Body of pancreas (tissue), 4 donors: ENCODE measurements at regions of chr16 and their contacts with region 1.

Region 1: GRCh38 chr16:4693296-4693955 is at the start of gene NUDT16L1:
- DNase-seq: peak; percentile 96 to 97 (median 97)
- ATAC-seq: peak; percentile 93
- H3K4me3 ChIP-seq: peak within 1 kb of the TSS; percentile 84 to 93
- H3K27ac ChIP-seq: peak within 1 kb of the TSS; percentile 84 to 96 (median 89)
- H3K4me1 ChIP-seq: peaks cover 25% of the 10 kb centered on the region
- H3K27me3 ChIP-seq: no peaks in the 10 kb centered on the region
- CTCF ChIP-seq: peak in 4 of 7 experiments; percentile 7 to 63 (median 38)
- POLR2A ChIP-seq: peak; percentile 71 to 83 (median 81)
- total RNA-seq, gene NUDT16L1: 18.7 to 25.4 TPM

Region 2: DNA sequence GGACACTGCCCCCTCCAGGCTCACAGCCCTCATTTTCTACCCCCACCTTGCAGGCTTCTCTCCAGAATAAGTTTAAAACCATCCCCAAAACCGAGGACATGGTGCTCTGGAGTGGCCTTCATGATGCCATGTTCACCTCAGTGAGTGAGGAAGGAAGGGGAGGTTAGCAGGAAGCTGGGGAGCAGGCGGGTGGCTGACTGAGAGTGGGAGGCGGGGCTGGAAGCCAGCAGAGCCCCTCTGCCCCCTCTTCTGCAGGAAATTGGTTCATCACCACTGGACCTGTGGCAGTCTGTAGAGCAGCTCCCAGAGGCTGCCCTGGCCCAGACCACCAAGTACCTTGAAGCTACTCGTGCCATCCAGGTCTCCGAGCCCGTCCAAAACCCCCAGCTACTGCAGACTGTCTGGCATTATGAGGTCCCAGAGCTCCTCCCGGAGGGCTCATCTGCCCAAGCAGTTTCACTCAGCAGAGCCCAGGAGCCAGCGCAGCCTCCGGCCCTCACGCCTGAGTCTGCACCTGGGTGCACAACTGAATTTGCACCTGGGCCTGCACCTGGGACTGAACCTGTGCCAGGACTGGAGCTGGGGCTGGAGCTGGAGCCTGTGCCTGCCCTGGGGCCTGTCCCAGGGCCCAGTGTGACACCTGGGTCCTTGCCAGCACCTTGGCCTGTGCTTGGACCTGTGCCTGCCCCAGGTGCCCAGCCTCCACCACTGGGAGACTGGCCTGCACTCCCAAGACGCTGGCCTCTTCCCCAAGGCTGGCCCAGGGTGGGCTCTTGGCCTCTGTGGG is 118.3 kb before region 1 on chr16:
- intact Hi-C with region 1: no loop called
- DNase-seq: peak; percentile 74 to 92 (median 85)
- ATAC-seq: peak; percentile 86
- H3K4me3 ChIP-seq: no peak overlapping the region
- H3K27ac ChIP-seq: no peak overlapping the region
- H3K4me1 ChIP-seq: peaks cover 10% of the 10 kb centered on the region
- H3K27me3 ChIP-seq: no peaks in the 10 kb centered on the region
- CTCF ChIP-seq: no peak
- POLR2A ChIP-seq: no peak

Region 3: DNA sequence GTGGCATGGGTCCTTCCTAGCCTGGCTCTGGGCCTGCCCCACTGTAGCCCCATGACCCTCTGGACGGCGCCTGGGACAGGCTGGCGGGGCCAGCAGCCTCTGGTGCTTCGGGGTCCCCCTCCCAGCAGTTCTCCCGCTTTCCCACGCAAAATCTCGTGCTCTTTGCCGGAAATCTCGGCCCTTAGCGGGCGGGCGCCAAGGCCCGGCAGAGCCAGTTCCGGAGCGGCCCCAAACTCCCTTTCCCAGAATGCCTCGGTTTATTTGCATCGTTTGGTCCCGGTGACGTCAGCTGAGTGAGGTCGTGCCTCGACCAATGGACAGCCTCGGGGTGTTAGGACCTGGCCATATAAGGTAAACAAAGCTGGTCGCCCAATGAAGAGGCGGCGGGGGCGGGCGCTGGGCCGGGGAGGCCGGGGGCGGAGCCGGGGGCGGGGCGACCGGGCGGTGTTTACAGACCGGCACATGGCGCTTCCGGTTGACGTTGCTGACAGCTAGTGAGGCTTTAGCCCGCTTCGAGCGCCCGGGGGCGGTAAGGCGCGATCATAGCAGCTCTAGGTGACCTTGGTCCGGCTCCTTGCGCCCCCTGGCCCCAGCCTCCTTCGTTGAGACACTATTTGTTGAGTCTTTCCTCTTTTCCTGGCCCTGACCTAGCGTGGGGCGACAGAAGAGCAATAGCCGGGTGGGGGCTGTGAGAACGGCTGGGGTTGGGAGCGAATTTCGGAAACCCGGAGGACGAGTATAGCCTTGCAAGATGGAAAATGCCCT is 77.2 kb before region 1 on chr16:
- intact Hi-C with region 1: loop called (anchors 5 kb)
- DNase-seq: peak; percentile 100
- ATAC-seq: peak; percentile 89
- H3K4me3 ChIP-seq: peak overlapping the region; percentile 8 to 18
- H3K27ac ChIP-seq: peak overlapping the region; percentile 94 to 99 (median 98)
- H3K4me1 ChIP-seq: peaks cover 66% of the 10 kb centered on the region
- H3K27me3 ChIP-seq: no peaks in the 10 kb centered on the region
- CTCF ChIP-seq: peak in 5 of 7 experiments; percentile 21 to 47 (median 41)
- POLR2A ChIP-seq: peak; percentile 78 to 95 (median 93)

Region 4: GRCh38 chr16:4747906-4748681 is 54.7 kb after region 1 on chr16:
- intact Hi-C with region 1: no loop called
- DNase-seq: no peak
- ATAC-seq: no peak
- H3K4me3 ChIP-seq: no peak overlapping the region
- H3K27ac ChIP-seq: no peak overlapping the region
- H3K4me1 ChIP-seq: peaks cover 5% of the 10 kb centered on the region
- H3K27me3 ChIP-seq: no peaks in the 10 kb centered on the region
- CTCF ChIP-seq: no peak
- POLR2A ChIP-seq: no peak

Region 5: GRCh38 chr16:4957720-4958509 is 264.5 kb after region 1 on chr16 and contains the start of gene SEC14L5:
- intact Hi-C with region 1: loop called (anchors 10 kb)
- DNase-seq: peak; percentile 100
- ATAC-seq: peak; percentile 93
- H3K4me3 ChIP-seq: peak within 1 kb of the TSS in 1 of 2 donors; percentile 3
- H3K27ac ChIP-seq: peak within 1 kb of the TSS; percentile 63 to 82 (median 78)
- H3K4me1 ChIP-seq: peaks cover 23% of the 10 kb centered on the region
- H3K27me3 ChIP-seq: no peaks in the 10 kb centered on the region
- CTCF ChIP-seq: peak in 1 of 7 experiments; percentile 15
- POLR2A ChIP-seq: peak in 2 of 3 donors; percentile 76 to 77
- total RNA-seq, gene SEC14L5: 0.26 TPM in 1 of 2 donors, not detected in the other